ENCODE measurements at regions of chr17 and their contacts with region 1.

Region 1: DNA sequence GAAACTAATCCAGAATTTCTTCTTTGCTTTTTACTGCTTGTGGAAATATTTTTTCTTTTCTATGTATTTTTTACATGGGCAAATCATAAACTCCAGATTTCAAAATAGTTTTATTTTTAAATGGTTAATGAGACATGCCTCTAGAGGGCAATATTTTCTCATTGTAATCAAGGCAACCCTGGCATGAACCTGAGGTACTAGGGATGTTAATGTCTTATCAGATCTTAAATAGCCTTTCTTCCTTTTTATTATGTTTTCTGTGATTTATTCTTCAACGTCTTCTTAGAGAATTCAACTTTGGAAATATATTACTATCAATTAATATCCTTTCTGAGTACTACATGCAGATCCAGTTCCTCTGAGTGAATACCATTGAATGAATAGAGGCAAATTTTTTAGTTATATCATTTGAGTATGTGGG is 324.7 kb downstream of the BCAS3 start:
- DNase-seq: peak in 4 of 14 experiments; percentile 5 to 45 (median 36)
- ATAC-seq: no peak
- H3K4me3 ChIP-seq: no peak overlapping the region
- H3K4me3 Mint-ChIP-seq: no peak overlapping the region
- H3K27ac ChIP-seq: no peak overlapping the region
- H3K27ac Mint-ChIP-seq: no peak overlapping the region
- H3K4me1 ChIP-seq: no peaks in the 10 kb centered on the region
- H3K4me1 Mint-ChIP-seq: no peaks in the 10 kb centered on the region
- H3K27me3 ChIP-seq: no peaks in the 10 kb centered on the region
- H3K27me3 Mint-ChIP-seq: no peaks in the 10 kb centered on the region
- CTCF ChIP-seq: peak; percentile 70

Region 2: DNA sequence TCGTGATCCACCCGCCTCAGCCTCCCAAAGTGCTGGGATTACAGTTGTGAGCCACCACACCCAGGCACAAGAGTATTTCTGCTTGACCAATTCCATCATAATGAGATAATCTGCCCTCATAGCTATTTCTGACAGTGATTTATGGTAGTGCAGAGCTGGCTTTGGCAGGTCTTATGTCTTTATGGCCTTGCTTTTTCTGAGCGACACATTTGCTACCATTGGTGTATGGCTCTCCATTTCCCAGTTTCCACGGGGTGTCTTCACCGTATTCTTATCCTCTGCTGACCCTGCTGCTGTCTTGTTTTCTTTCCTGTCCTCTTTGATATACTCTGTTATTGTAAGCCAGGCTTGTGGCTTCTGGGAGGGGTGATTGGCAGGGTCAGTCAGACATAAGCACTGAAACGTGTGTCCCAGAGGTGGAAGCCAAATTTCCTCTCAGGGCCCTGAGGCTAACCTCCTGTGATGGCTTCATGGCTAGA is 236.2 kb after region 1 on chr17:
- CTCF ChIA-PET with region 1: no interaction called
- POLR2A ChIA-PET with region 1: no interaction called
- intact Hi-C with region 1: no loop called
- DNase-seq: no peak
- ATAC-seq: no peak
- H3K4me3 ChIP-seq: no peak overlapping the region
- H3K4me3 Mint-ChIP-seq: no peak overlapping the region
- H3K27ac ChIP-seq: no peak overlapping the region
- H3K27ac Mint-ChIP-seq: no peak overlapping the region
- H3K4me1 ChIP-seq: no peaks in the 10 kb centered on the region
- H3K4me1 Mint-ChIP-seq: peaks cover 4% of the 10 kb centered on the region
- H3K27me3 ChIP-seq: no peaks in the 10 kb centered on the region
- H3K27me3 Mint-ChIP-seq: no peaks in the 10 kb centered on the region
- CTCF ChIP-seq: no peak

Region 3: DNA sequence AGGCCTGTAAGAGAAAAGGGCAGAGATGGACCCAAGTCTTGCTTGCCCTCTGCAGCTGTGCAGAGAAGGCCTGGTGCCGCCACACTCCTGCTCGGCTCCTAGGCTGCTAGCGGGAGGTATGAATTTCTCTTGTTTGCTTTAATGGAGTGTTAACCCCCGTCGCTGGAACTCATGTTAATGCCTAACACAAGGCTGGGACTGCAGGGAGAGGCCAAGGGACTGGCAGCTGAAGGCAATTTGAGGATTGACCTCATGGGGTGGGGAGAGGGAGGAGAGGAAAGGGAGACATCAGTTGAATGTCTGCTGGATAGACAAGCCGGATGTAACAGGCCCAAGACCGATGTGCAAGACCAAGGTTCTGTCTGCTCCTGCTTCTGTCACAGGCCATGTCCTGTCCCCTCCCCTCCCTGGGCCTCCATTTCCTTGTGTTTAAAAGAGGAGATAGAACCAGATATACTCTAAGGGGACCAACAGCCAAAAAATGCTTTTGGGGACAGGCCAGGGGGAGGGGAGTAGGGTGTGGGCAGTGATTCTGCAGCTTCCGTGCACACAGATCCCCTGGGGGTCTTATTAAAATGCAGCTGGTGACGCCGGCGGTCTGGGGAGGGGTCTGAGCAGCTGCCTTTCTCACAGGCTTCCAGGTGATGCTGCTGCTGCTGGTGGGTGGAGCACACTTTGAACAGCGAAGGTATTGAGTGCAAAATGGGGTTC is 350.6 kb after region 1 on chr17:
- CTCF ChIA-PET with region 1: no interaction called
- POLR2A ChIA-PET with region 1: no interaction called
- intact Hi-C with region 1: loop called (anchors 2 to 10 kb)
- DNase-seq: no peak
- ATAC-seq: no peak
- H3K4me3 ChIP-seq: no peak overlapping the region
- H3K4me3 Mint-ChIP-seq: no peak overlapping the region
- H3K27ac ChIP-seq: no peak overlapping the region
- H3K27ac Mint-ChIP-seq: no peak overlapping the region
- H3K4me1 ChIP-seq: no peaks in the 10 kb centered on the region
- H3K4me1 Mint-ChIP-seq: no peaks in the 10 kb centered on the region
- H3K27me3 ChIP-seq: no peaks in the 10 kb centered on the region
- H3K27me3 Mint-ChIP-seq: no peaks in the 10 kb centered on the region
- CTCF ChIP-seq: no peak

Region 4: GRCh38 chr17:61361084-61361483 is 358.8 kb after region 1 on chr17:
- CTCF ChIA-PET with region 1: no interaction called
- POLR2A ChIA-PET with region 1: no interaction called
- intact Hi-C with region 1: loop called (anchors 2 to 10 kb)
- DNase-seq: no peak
- ATAC-seq: no peak
- H3K4me3 ChIP-seq: no peak overlapping the region
- H3K4me3 Mint-ChIP-seq: no peak overlapping the region
- H3K27ac ChIP-seq: no peak overlapping the region
- H3K27ac Mint-ChIP-seq: no peak overlapping the region
- H3K4me1 ChIP-seq: no peaks in the 10 kb centered on the region
- H3K4me1 Mint-ChIP-seq: no peaks in the 10 kb centered on the region
- H3K27me3 ChIP-seq: no peaks in the 10 kb centered on the region
- H3K27me3 Mint-ChIP-seq: no peaks in the 10 kb centered on the region
- CTCF ChIP-seq: no peak

Region 5: DNA sequence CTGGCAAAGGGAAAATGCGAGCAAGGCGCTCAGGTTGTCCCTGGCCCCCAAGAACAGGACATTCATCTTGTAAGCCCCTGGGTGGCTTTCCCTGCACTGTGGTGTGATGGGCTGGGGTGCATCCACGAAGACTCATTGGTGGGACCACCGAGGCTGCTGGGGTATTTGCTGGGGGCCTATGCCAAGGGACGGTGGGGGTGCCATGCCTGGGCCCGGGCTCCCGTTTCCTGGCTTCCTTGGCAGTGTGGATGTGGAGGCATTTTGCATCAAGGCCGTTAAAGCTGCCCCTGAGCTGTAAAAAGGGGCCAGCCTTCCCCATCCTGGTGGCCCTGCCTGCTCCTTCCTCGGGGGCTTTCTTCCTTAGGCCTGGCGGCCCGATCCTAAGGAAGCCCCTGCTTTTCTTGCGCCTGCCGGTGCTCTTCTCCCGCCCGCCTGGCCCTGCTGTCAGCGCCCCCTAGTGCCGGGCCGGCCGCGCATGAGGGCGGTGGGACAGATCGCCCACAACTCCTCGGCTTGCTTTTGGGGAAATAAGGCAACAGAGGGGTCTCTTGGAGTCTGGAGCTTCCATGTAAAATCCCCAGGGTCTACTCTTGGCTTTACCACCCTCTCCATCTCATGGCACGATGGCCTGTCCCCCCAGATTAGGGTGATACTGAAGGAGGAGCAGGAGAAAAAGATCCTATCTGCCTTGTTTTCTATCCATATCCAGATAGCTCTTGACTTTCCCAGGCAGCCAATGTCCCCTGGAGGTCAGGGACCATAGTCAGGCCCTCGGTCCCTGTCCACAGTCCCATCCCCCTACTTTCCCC is 387.5 kb after region 1 on chr17:
- CTCF ChIA-PET with region 1: no interaction called
- POLR2A ChIA-PET with region 1: no interaction called
- intact Hi-C with region 1: loop called (anchors 1 kb)
- DNase-seq: peak in 8 of 14 experiments; percentile 26 to 66 (median 51)
- ATAC-seq: peak; percentile 49
- H3K4me3 ChIP-seq: no peak overlapping the region
- H3K4me3 Mint-ChIP-seq: no peak overlapping the region
- H3K27ac ChIP-seq: no peak overlapping the region
- H3K27ac Mint-ChIP-seq: no peak overlapping the region
- H3K4me1 ChIP-seq: peaks cover 7% of the 10 kb centered on the region
- H3K4me1 Mint-ChIP-seq: no peaks in the 10 kb centered on the region
- H3K27me3 ChIP-seq: peaks cover 0 to 2% of the 10 kb centered on the region in 2 experiments
- H3K27me3 Mint-ChIP-seq: peaks cover 31% of the 10 kb centered on the region
- CTCF ChIP-seq: peak; percentile 71

Region 6: DNA sequence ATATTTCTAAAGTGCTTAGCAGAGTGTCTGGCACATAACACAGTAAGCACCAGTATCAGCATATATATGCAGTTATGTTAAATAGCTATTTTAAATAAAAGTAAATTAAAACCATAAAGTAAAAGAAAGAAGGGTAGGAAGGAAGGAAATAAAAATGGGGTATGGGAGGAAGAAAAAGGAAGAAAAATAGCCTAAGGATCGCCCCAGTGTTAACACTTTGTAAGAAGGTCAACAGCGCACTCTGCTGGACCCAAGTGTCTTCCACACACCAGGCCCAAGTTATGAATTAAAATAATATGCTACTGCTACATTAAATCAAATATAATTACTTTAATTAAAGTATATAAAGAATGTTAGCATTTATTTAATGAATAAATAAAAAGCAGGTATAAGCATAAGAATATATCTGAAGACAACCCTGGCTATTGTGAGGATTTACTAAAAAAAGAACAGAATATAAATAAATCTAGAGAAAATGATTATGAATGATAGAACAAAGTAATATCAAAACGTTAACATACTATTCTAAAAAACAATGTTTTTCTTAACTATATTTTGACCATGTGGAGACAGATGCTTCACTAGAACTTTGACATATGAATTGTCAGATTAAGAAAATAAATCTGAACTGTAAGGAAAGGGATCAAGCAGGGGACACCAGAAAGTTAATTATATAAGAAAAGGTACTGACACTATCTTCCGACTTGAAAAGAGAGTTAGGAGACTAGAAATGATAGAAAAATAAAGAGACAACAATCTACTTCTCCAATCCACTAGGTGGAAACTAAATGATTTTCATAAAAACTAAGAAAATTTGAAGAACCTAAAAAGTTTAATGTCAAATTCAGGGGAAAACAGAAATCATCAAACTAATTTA is 835.1 kb after region 1 on chr17:
- CTCF ChIA-PET with region 1: no interaction called
- POLR2A ChIA-PET with region 1: no interaction called
- intact Hi-C with region 1: loop called in 1 of 2 experiments (anchors 10 kb)
- DNase-seq: peak; percentile 9 to 74 (median 38)
- ATAC-seq: peak; percentile 43
- H3K4me3 ChIP-seq: no peak overlapping the region
- H3K4me3 Mint-ChIP-seq: no peak overlapping the region
- H3K27ac ChIP-seq: no peak overlapping the region
- H3K27ac Mint-ChIP-seq: no peak overlapping the region
- H3K4me1 ChIP-seq: no peaks in the 10 kb centered on the region
- H3K4me1 Mint-ChIP-seq: no peaks in the 10 kb centered on the region
- H3K27me3 ChIP-seq: no peaks in the 10 kb centered on the region
- H3K27me3 Mint-ChIP-seq: no peaks in the 10 kb centered on the region
- CTCF ChIP-seq: peak; percentile 65